Astrocyte of the cerebellum (primary cell): ENCODE measurements at regions of chr17 and their contacts with region 1.

Region 1: DNA sequence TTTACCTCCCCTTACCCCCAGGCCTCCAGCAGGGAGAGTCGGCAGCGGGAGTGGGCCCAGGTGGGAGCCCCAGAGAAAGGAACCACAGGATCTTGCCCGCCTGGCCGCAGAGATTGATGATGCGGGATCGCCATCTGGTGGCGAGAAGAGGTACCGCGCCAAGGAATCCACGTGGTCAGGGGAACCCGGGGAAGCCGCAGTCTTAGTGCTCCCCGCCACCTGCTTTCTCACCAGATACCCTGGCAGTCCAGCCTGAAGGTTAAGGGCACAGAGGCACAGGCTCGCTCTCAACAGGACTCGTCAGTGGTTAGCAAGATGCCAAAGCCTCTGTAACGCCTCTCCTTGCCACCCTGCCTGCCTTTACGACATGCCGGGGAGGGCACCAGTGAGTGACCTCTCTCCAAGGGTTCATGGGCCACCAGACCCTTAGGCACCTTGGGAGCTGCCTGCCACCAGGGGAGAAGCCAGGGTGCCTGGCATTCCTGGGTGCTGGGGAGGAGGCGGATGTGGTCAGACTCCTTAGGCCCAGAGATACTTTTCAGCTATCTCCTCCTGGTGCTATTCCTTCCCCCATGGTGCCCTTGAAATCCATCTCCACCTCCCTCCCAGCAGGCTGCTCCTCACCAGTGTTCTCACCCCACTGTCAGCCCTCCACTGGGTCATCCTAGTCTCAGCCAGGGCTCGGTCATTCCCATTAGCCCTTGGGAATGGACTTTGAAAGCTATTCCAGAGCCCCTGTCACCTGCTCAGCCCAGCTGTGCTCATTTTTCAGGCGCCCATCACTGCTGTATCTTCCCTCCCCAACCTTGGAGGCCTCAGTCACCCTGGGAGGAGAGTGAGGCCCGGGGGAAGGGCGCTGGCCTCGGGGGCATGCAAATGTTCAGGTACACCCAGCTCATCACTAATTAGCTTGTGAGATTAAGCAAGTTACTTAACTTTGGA is 5.5 kb upstream of the RHBDF2 start:
- DNase-seq: no peak
- H3K4me3 ChIP-seq: no peak overlapping the region
- CTCF ChIP-seq: peak; percentile 88

Region 2: GRCh38 chr17:76467366-76467765 is 39.3 kb before region 1 on chr17 and contains the start of gene AANAT:
- in situ Hi-C with region 1: loop called (anchors 5 kb)
- DNase-seq: no peak
- H3K4me3 ChIP-seq: no peak within 1 kb of the TSS
- CTCF ChIP-seq: no peak

Region 3: DNA sequence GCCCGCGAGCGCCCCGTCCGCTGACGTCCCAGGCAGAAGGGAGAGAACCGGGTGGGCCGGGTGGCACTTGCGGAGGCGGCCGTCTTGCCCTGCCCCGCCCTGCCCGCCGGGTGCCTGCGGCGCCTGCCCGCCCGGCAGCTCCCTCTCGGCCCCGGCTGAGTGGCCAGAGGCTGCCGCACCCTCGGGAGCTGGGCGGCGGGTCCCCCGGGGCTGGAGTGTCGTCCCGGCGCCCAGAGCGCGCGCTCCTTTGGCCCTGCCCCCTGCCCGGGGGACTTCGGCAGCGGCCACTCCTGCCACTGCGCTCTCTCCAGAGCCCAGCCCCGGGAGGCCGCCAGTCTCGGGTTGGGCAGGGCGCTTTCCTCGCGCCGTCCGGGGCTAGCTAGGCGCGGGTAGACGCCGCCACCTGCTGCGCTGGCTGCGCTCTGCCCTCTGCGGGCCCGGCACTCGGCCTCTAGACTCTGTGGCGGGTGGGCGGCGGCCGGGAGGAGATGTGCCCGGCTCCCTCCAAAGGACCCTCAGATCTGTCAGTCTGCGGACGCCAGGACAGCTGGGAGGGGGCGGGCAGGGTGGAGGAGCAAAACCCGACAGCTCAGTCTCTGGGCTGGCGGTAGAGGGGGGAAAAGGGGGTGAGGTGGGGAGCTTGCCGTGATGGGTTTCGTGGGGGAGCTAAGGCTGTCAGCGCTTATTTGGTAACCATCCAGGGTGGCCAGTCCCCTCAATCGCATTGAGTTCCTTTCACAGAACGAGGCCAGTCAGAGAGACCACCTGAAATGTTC is 79.3 kb after region 1 on chr17 and contains the start of gene ST6GALNAC2:
- in situ Hi-C with region 1: no loop called
- DNase-seq: no peak
- H3K4me3 ChIP-seq: peak within 1 kb of the TSS; percentile 43
- CTCF ChIP-seq: no peak